ENCODE measurements at regions of chr1 and their contacts with region 1.

Region 1: GRCh38 chr1:235011599-235012435 is 116.8 kb downstream of the TOMM20 start:
- DNase-seq: peak; percentile 99 to 100 (median 100)
- H3K4me3 ChIP-seq: peak overlapping the region in 4 of 7 experiments; percentile 15 to 44 (median 30)
- H3K27ac ChIP-seq: peak overlapping the region; percentile 91 to 94
- H3K4me1 ChIP-seq: peaks cover 3 to 52% (median 40%) of the 10 kb centered on the region in 4 experiments
- H3K27me3 ChIP-seq: no peaks in the 10 kb centered on the region

Region 2: DNA sequence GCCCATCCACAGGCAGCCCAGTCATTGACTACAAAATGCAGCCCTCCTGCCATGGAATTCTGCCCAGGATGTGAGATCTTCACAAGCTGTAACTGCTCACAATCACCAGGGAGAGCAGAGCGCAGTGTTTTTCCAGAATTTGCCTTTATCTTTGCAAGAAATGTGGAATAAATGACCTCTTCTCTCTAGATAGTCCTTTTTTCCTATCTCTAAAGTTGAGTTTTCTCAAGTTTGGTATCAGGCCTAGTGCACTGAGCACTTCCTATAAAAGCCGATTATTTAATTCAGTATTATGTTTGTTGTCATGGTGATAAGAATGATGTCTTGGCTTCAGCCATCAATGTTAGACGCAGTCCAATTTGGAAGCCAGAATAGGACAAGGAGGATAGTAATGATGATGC is 155.0 kb before region 1 on chr1:
- CTCF ChIA-PET with region 1: no interaction called
- POLR2A ChIA-PET with region 1: no interaction called
- DNase-seq: no peak
- H3K4me3 ChIP-seq: no peak overlapping the region
- H3K27ac ChIP-seq: no peak overlapping the region
- H3K4me1 ChIP-seq: peaks cover 8 to 21% (median 12%) of the 10 kb centered on the region in 4 experiments
- H3K27me3 ChIP-seq: no peaks in the 10 kb centered on the region

Region 3: GRCh38 chr1:235077571-235078479 is 66.0 kb after region 1 on chr1:
- CTCF ChIA-PET with region 1: interaction called, 13 read pairs
- POLR2A ChIA-PET with region 1: interaction called, 16 read pairs
- DNase-seq: peak in 2 of 3 donors; percentile 67 to 80
- H3K4me3 ChIP-seq: no peak overlapping the region
- H3K27ac ChIP-seq: no peak overlapping the region
- H3K4me1 ChIP-seq: peaks cover 8 to 69% (median 60%) of the 10 kb centered on the region in 4 experiments
- H3K27me3 ChIP-seq: no peaks in the 10 kb centered on the region

Measured in common myeloid progenitor, CD34-positive (primary cell).